Panc1 (cell line): ENCODE measurements at regions of chr6 and their contacts with region 1.

Region 1: DNA sequence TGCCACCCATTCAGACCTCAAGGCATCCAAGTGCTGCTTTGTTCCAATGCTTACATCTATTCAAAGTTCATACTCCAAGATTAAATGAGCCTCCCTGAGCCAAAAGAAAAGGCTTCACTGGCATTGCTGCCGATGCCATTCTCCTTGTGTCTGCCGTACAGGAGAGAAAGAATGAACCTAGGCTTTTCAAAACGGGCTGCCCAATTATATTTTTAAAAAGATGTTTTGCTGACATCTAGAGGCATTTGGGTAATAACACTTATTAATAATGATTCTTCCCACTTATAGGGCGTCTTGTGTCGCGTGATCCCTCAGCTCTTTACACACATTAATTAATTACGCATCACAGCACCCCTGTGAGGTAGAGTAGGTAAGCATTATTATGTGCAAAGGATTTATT is 545.6 kb downstream of the PKHD1 start:
- DNase-seq: no peak
- ATAC-seq: no peak
- H3K4me3 ChIP-seq: no peak overlapping the region
- H3K27ac ChIP-seq: no peak overlapping the region
- H3K4me1 ChIP-seq: no peaks in the 10 kb centered on the region
- H3K27me3 ChIP-seq: no peaks in the 10 kb centered on the region; the same call in 1 of the 2 replicates
- CTCF ChIP-seq: no peak; the same call in 1 of the 2 replicates

Region 2: DNA sequence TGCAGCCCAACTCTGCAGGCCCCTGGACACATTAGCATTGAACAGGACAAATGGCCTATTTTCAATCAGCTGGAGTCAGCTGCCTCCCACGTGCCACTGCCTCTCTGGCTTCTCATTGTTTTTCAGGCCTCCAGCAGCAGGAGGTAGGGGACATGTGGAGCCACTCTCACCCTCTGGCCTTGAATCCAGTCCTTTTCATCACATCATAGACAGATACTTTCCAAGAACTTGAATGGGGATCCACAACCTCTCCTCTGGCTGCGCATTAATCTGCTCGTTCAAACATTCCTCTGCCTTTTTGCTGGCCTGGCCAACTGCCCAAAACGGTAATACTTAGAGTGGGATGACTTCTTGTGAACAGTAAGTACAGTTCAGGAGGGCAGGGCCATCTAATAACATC is 46.8 kb before region 1 on chr6:
- CTCF ChIA-PET with region 1: interaction called, 12 read pairs
- POLR2A ChIA-PET with region 1: no interaction called
- in situ Hi-C with region 1: no loop called
- intact Hi-C with region 1: no loop called
- DNase-seq: no peak
- ATAC-seq: no peak
- H3K4me3 ChIP-seq: no peak overlapping the region
- H3K27ac ChIP-seq: no peak overlapping the region
- H3K4me1 ChIP-seq: no peaks in the 10 kb centered on the region
- H3K27me3 ChIP-seq: no peaks in the 10 kb centered on the region
- CTCF ChIP-seq: no peak